Common myeloid progenitor, CD34-positive (primary cell): ENCODE measurements at regions of chr15 and their contacts with region 1.

Region 1: DNA sequence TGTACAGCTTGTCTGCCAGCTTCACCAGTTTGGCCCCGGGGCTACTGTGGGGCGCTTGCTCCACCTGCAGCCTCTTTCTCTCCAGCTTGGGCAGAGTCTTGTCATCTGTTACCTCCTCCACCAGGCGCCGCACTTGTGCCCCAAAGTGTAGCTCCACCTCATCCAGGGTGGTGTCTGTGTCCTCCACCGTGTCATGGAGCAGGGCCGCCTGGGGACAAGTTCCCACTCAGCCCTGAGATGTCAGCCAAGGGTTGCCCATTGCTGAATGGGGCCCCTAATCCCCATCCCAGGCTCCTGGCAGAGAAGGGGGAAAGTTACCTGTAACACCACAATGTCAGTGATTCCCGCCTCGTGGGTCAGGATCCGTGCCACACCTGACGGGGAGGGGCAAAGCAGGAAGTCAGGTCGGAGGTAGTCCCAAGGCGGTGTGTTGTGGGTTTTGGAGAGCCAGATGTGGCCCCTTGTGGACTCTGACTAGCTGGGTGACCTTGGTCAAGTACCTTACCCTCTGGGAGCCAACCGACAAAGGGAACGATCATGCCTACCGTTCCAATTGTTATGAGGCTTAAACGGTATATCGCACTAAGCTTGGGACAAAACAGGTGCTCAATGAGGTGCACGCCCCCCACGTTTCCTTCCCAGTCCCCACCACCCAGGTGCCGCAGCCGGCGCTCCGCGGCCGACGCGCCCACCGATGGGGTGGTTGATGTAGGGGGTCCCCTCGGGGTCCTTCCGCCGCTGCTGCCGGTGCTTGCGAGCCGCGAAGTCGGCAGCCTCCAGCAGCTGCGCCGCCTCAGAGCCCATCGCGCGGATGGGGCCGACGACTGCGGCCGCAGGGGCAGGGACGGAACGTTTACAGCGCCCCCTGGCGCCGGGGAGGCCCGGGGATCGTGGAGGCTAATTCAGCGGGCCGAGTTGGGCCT is at the start of gene HDDC3:
- DNase-seq: peak; percentile 90 to 93 (median 91)
- H3K4me3 ChIP-seq: peak within 1 kb of the TSS; percentile 55 to 91 (median 87)
- H3K27ac ChIP-seq: peak within 1 kb of the TSS; percentile 36 to 89
- H3K4me1 ChIP-seq: peaks cover 20 to 72% (median 60%) of the 10 kb centered on the region in 4 experiments
- H3K27me3 ChIP-seq: no peaks in the 10 kb centered on the region

Region 2: DNA sequence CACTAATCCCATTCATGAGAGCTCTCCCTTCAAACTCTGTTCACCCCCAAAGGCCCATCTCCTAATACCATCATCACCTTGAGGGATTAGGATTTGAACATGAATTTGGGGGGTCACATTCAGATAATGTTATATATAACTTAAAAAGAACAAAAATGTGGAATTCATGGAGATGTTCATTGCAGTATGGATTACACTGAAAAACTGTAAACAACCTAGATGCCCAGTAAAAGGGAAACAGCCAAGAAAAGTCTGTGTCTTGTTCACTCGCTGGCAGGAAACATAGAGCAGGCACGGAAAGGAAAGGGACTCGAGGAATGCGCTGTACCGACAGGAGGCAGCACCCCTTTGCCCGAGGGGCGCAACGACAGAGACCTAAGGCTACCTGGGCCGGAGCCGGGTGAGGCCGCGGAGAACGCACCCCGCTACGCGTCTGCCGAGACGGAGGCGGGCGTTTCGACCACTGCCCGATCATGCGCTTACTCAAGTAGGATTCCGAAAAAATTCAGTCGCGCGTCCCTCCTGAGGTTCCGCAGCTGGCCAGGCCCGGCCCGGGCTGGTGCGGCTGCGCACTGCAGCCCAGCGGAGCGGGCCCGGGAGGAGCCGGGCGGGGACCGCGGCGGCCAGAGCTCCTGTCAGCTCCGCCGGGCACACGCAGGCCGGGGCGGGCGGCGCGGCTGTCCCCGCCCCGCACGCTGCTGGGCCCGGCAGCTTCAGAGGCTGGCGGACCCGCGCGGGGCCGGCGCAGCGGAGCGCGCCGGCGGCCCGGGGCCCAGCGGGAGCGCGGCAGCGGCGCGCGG is 29.8 kb before region 1 on chr15:
- CTCF ChIA-PET with region 1: interaction called, 258 read pairs
- POLR2A ChIA-PET with region 1: interaction called, 32 read pairs
- DNase-seq: peak; percentile 74 to 82 (median 80)
- H3K4me3 ChIP-seq: peak overlapping the region; percentile 69 to 85 (median 79)
- H3K27ac ChIP-seq: peak overlapping the region; percentile 85 to 93
- H3K4me1 ChIP-seq: peaks cover 2 to 24% (median 20%) of the 10 kb centered on the region in 4 experiments
- H3K27me3 ChIP-seq: no peaks in the 10 kb centered on the region

Region 3: DNA sequence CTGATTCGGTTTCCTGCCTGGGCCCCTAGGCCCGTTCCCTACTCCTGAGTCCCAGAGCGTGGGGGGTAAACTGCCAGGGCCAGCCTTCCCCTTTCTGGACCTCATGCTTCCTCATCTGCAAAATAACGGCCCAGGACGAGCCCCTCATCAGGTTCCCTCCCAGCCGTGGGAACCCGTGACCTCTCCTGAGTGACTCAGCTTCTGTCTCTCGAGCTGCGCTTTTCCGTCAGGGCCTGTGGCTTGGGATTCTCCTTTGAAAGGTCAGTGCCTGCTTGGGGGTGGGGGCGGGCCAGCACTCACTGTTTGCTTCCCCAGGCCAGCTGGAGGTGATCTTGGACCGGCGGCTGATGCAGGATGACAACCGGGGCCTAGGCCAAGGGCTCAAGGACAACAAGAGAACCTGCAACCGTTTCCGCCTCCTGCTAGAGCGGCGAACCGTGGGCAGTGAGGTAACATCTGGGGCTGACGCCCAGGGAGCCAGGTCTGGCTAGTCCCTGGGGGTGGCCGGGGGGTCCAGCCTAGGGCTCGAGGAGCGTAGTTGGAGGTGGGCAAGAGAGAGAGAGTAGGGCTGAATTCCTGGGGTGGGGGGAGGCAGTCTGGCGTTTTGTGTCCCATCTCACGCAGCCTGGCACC is 16.1 kb before region 1 on chr15:
- CTCF ChIA-PET with region 1: interaction called, 46 read pairs
- POLR2A ChIA-PET with region 1: interaction called, 5 read pairs
- DNase-seq: peak; percentile 81 to 93 (median 91)
- H3K4me3 ChIP-seq: peak overlapping the region in 5 of 7 experiments; percentile 44 to 68 (median 61)
- H3K27ac ChIP-seq: peak overlapping the region; percentile 80 to 85
- H3K4me1 ChIP-seq: peaks cover 11 to 40% (median 33%) of the 10 kb centered on the region in 4 experiments
- H3K27me3 ChIP-seq: no peaks in the 10 kb centered on the region

Region 4: GRCh38 chr15:90946538-90946937 is 14.5 kb after region 1 on chr15:
- CTCF ChIA-PET with region 1: interaction called, 134 read pairs
- POLR2A ChIA-PET with region 1: no interaction called
- DNase-seq: no peak
- H3K4me3 ChIP-seq: no peak overlapping the region
- H3K27ac ChIP-seq: no peak overlapping the region
- H3K4me1 ChIP-seq: peaks cover 0 to 15% (median 11%) of the 10 kb centered on the region in 4 experiments
- H3K27me3 ChIP-seq: no peaks in the 10 kb centered on the region